SK-N-SH (cell line): ENCODE measurements at regions of chr7 and their contacts with region 1.

Region 1: DNA sequence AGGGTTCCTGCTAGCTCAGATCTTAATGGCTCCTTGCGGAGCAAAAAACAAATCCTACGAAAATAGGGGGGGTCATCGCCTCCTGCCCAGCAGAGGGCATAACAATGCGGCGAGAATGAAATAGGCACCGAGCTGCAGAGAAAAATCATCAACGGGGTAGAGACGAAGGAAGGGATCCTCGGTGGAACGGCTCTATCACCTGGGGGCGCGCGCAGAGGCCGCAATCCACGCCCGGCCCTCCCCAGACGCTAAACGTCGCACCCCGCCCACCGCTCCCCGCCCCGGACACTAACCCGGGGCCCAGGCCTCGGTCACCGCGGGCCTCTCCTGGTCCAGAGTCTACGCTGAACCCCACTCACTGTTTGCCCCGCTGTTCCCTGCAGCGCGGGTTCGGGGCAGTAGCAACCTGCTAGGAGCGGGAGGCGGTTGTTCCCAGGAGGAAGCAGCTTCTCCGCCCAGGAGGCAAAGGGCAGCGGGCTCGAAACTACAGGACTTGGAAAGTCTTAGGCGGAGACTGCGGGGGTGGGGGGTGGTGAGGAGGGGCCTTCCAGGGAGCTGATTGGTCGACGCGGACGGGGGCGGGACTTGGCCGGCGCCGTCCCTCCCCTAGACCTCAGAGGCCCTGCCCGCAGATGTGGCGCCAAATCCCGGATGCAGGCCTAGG is at the start of gene TCAF1:
- DNase-seq: peak; percentile 99
- H3K4me3 ChIP-seq: peak within 1 kb of the TSS; percentile 90 to 91
- H3K27ac ChIP-seq: peak within 1 kb of the TSS; percentile 91 to 98
- H3K4me1 ChIP-seq: peaks cover 13 to 17% of the 10 kb centered on the region in 2 experiments; a peak in 3 of 4 replicates
- H3K27me3 ChIP-seq: no peaks in the 10 kb centered on the region
- CTCF ChIP-seq: peak; percentile 70
- EP300 ChIP-seq: no peak
- RAD21 ChIP-seq: no peak; the same call in 1 of the 2 replicates
- polyA plus RNA-seq, gene TCAF1: 59.0 and 69.0 TPM in 2 replicates

Region 2: GRCh38 chr7:143884969-143885559 is 16.7 kb before region 1 on chr7:
- CTCF ChIA-PET with region 1: interaction called, 66 read pairs
- POLR2A ChIA-PET with region 1: interaction called, 89 read pairs
- DNase-seq: peak; percentile 97
- H3K4me3 ChIP-seq: peak overlapping the region; percentile 75 to 96
- H3K27ac ChIP-seq: peak overlapping the region; percentile 43 to 94
- H3K4me1 ChIP-seq: peaks cover 16 to 29% of the 10 kb centered on the region in 2 experiments; a peak in 3 of 4 replicates
- H3K27me3 ChIP-seq: no peaks in the 10 kb centered on the region
- CTCF ChIP-seq: no peak
- EP300 ChIP-seq: no peak
- RAD21 ChIP-seq: peak; percentile 49

Region 3: DNA sequence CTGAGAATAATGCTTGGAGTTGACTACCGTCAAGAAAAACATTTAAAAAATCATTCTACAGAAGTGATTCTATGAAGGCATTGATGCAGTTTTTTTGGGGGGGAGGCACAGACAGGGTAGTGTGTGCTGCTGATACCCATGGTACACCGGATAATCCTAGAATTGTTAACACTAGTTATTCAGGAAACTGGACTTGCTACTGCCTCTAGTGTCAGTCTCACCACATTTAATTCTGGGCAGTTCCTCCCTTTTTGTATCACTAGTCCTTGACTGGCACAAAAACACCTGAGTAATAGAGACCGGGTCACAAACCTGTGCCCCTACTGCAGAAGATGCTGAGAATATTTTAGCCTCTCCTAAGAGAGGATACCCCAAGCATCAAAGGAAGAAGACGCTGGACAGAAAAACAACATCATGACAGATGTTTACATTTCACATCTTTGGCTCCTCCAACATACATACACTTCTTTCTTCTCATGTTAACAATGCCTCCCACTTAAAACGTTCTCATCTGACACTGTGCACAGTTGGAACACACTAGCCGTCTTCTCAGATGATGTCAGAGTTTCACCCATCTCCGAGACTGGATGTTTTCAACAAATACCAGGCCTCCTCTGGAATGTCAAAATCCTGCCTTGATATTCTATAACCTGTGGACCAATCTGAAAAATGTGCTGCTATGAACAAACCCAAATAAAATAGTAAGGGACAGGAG is 13.3 kb after region 1 on chr7:
- CTCF ChIA-PET with region 1: interaction called, 10 read pairs
- POLR2A ChIA-PET with region 1: interaction called, 11 read pairs
- DNase-seq: no peak
- H3K4me3 ChIP-seq: no peak overlapping the region
- H3K27ac ChIP-seq: no peak overlapping the region
- H3K4me1 ChIP-seq: no peaks in the 10 kb centered on the region
- H3K27me3 ChIP-seq: peaks cover 6% of the 10 kb centered on the region; the same call in 1 of the 2 replicates
- CTCF ChIP-seq: peak; percentile 18; the same call in 1 of the 2 replicates
- EP300 ChIP-seq: no peak
- RAD21 ChIP-seq: no peak